ENCODE measurements at regions of chr11 and their contacts with region 1.

Region 1: DNA sequence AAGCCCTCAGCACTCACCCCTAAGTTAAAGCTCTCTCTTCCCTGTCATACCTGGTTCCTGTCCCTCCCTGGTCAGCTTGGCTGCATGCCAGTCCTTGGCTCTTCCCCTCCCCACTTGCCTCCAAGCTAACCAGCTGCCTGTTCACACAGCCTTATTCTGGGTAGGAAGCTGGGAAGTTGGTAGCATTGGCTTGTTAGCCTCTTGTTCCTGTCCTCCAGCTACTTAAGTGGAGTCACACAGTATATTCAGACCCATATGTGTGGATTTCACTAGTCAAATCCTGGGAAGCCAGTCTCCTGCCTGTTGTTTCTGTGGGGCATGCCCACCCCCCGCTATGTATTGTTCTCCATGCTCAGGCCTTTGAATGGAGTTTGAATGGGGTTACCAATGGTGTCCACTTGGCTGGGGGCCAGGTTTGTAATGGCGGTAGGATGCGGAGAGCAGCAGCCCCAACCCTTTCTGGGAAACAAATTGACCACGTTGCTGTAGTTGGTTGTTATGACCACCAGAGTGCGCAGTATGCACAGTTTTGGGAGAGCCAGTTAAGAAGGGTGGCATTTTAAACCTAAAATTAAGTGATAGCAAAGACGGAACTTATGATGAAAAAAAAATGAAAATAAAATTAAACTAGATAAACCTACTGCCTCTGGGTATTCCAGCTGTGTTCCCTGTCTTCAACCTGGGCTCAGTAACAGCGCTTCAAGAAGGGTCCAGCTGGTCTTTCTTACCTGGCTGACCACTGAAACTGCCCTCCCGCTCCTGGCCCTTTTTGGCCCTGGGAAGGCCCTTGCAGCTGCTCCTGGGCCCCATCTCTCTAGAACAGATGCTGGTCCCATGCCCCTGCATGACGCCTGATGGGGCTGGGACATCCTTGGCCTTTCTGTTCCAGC is 10.7 kb upstream of the RPS3 start:
- DNase-seq: peak; percentile 62 to 76
- ATAC-seq: peak; percentile 74 to 85 (median 78)
- H3K4me3 ChIP-seq: no peak overlapping the region
- H3K27ac ChIP-seq: no peak overlapping the region
- H3K4me1 ChIP-seq: peaks cover 10% of the 10 kb centered on the region
- H3K27me3 ChIP-seq: no peaks in the 10 kb centered on the region
- CTCF ChIP-seq: peak; percentile 81

Region 2: GRCh38 chr11:75031771-75032549 is 356.7 kb before region 1 on chr11:
- intact Hi-C with region 1: no loop called
- DNase-seq: peak; percentile 76 to 89
- ATAC-seq: peak; percentile 78 to 94 (median 81)
- H3K4me3 ChIP-seq: no peak overlapping the region
- H3K27ac ChIP-seq: no peak overlapping the region
- H3K4me1 ChIP-seq: peaks cover 13% of the 10 kb centered on the region
- H3K27me3 ChIP-seq: no peaks in the 10 kb centered on the region
- CTCF ChIP-seq: peak; percentile 73

Region 3: DNA sequence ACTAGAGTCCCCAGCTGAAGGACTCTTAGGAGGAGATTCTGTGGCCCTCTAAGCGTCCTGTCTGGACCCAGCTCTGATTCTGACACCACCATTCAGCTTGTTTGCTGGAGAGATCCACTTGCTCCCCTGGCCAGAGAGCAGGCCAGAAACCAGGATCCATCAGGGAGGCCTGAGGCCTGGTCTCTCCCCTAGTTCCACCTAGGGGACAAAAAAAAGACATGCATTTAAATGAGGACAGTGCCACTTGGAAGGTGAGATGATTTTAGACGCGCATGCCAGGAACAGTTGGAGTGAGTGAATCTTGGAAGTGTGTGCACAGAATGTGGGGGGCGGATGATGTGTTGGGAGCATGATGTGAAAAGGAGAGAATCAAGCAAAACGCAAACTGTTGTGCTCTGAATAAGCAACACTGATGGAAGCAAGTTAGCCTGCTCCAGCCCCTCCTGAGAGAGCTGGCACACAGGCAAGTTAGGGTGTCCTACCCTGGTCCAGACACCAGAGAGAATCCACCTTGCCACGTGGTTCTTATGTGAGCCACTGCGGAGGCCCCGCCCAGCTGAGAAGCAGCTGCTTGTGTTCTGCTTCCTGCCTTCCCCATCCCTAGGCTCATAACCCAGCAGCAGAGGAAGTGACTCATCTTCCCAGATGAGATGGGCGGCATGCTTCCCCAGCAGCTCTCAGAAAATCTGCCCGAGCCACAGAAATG is 245.8 kb before region 1 on chr11:
- intact Hi-C with region 1: loop called in 1 of 2 experiments (anchors 10 kb)
- DNase-seq: peak; percentile 79 to 82
- ATAC-seq: peak; percentile 75 to 82 (median 79)
- H3K4me3 ChIP-seq: no peak overlapping the region
- H3K27ac ChIP-seq: no peak overlapping the region
- H3K4me1 ChIP-seq: peaks cover 3% of the 10 kb centered on the region
- H3K27me3 ChIP-seq: peaks cover 0 to 8% (median 0%) of the 10 kb centered on the region in 3 donors
- CTCF ChIP-seq: no peak

Region 4: DNA sequence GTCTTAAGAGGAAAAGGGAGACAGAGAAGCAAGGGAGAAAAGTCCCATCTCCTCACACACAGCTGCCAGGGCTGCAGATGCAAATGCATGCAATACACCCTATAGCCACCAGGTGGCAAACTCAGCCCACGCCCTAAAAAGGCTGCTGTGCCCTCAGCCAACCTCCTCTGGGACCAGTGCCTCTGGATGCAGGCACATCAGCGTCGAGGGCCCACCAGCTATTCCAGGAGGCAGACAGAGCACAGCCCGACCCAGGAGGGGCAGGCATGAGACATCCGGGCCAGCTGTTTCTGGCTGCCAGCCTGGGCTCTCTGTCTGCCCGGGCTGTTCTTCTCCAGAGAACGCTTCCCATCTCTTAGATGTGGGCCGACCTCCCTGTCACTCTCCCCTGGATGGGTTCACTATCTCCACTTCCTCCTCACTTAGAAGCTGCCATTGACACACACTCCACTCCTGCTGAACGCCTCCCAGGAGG is 108.4 kb before region 1 on chr11:
- intact Hi-C with region 1: loop called (anchors 1 to 2 kb)
- DNase-seq: peak; percentile 66 to 79
- ATAC-seq: peak; percentile 83 to 94 (median 88)
- H3K4me3 ChIP-seq: no peak overlapping the region
- H3K27ac ChIP-seq: no peak overlapping the region
- H3K4me1 ChIP-seq: no peaks in the 10 kb centered on the region
- H3K27me3 ChIP-seq: no peaks in the 10 kb centered on the region
- CTCF ChIP-seq: peak; percentile 99

Region 5: DNA sequence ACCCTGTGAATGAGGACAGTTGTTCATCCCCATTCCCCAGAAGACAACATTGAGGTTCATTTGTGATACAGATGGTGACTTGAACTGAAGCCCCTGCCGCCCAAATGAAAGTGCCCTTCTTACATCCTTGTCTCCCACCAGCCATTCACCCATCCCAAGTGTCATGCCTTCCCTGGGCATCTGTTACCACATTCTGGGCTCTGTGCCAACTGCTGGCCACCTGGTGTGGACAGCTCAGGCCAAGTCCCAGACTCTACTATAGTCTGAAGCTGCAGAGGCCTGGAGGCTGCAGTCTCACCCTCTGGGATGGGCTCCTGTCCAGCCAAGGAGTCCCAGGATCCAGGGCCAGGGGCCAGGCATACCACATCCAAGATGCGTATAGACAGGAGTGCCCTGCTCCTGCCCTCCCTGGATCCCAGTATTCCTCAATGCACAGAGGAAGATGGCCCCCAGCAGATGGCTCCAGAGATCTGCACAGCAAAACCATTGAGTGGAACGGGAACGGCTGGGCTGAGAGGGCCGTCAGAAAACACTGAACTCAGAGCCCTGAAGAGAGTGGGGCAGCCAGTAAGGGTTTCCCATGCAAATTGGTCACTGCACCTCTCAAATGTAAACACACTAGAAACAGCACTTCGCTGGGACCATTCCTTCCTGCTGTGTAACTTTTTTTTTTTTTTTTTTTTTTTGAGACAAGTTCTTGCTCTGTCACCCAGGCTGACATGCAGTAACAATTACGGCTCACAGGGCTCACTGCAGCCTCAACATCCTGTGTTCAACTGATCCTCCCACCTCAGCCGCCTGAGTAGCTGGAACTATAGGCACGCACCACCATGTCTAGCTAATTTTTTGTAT is 60.0 kb before region 1 on chr11:
- intact Hi-C with region 1: loop called in 1 of 2 experiments (anchors 1 kb)
- DNase-seq: peak; percentile 51 to 73
- ATAC-seq: peak; percentile 57 to 75 (median 68)
- H3K4me3 ChIP-seq: no peak overlapping the region
- H3K27ac ChIP-seq: no peak overlapping the region
- H3K4me1 ChIP-seq: peaks cover 6% of the 10 kb centered on the region
- H3K27me3 ChIP-seq: no peaks in the 10 kb centered on the region
- CTCF ChIP-seq: peak; percentile 31

Region 6: DNA sequence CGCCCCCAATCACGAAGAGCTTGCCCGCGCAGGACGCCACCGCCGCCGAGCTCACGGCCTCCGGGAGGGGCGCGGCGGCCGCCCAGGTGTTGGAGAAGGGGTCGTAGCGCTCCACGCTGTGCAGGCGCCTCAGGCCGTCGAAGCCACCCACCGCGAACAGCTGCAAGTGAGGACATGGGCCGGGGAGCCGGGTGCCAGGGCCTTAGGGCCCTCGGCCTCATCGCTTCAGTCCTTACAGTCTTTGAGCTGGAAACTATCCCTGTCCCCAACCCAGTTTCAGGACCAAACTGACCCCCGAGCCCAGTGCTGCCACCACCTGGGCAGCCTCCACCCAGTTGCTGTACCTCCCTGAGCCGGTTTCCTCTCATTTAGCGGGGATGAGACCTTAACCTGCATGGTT is 36.8 kb after region 1 on chr11:
- intact Hi-C with region 1: no loop called
- DNase-seq: peak; percentile 11 to 45
- ATAC-seq: no peak
- H3K4me3 ChIP-seq: no peak overlapping the region
- H3K27ac ChIP-seq: no peak overlapping the region
- H3K4me1 ChIP-seq: no peaks in the 10 kb centered on the region
- H3K27me3 ChIP-seq: peaks cover 0 to 18% (median 3%) of the 10 kb centered on the region in 3 donors
- CTCF ChIP-seq: peak; percentile 6

Region 7: DNA sequence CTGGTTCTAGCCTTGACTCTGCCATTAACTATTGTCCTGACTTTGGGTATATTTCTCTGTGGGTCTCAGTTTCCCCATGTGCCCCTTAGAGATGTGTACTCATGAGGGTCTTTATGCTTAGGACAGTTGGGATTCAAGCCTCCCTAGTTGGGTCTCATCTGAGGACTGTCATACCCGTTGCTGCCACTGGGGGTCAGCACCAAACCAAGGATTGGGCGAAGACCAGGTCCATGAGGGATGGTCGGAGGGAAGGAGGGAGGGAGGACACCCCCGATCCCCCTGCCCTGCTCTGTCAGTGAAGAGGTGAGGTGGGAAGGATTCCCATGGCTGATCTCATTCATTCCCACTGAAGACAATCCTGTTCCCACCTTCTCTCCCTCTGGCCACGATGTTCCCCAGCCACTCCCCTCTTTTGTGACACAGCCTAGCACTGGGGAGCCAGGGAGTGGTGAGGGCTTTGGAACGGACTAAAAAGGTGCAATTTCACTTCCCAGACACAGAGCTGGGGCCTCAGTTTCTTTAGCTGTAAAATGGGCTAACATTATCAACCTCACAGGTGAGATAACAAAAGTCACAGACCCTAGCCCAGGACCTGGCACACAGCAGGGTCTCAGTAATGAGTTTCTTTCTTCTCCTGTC is 56.8 kb after region 1 on chr11:
- intact Hi-C with region 1: loop called in 1 of 2 experiments (anchors 5 kb)
- DNase-seq: peak; percentile 75 to 84
- ATAC-seq: peak; percentile 83 to 95 (median 87)
- H3K4me3 ChIP-seq: no peak overlapping the region
- H3K27ac ChIP-seq: no peak overlapping the region
- H3K4me1 ChIP-seq: no peaks in the 10 kb centered on the region
- H3K27me3 ChIP-seq: no peaks in the 10 kb centered on the region
- CTCF ChIP-seq: peak; percentile 99

Region 8: GRCh38 chr11:75532200-75533048 is 143.8 kb after region 1 on chr11:
- intact Hi-C with region 1: loop called (anchors 2 kb)
- DNase-seq: peak; percentile 63 to 74
- ATAC-seq: peak; percentile 75 to 92 (median 90)
- H3K4me3 ChIP-seq: no peak overlapping the region
- H3K27ac ChIP-seq: no peak overlapping the region
- H3K4me1 ChIP-seq: no peaks in the 10 kb centered on the region
- H3K27me3 ChIP-seq: no peaks in the 10 kb centered on the region
- CTCF ChIP-seq: peak; percentile 96

Measured in psoas muscle (tissue), 8 donors.